ENCODE measurements at regions of chr12 and their contacts with region 1.

Region 1: DNA sequence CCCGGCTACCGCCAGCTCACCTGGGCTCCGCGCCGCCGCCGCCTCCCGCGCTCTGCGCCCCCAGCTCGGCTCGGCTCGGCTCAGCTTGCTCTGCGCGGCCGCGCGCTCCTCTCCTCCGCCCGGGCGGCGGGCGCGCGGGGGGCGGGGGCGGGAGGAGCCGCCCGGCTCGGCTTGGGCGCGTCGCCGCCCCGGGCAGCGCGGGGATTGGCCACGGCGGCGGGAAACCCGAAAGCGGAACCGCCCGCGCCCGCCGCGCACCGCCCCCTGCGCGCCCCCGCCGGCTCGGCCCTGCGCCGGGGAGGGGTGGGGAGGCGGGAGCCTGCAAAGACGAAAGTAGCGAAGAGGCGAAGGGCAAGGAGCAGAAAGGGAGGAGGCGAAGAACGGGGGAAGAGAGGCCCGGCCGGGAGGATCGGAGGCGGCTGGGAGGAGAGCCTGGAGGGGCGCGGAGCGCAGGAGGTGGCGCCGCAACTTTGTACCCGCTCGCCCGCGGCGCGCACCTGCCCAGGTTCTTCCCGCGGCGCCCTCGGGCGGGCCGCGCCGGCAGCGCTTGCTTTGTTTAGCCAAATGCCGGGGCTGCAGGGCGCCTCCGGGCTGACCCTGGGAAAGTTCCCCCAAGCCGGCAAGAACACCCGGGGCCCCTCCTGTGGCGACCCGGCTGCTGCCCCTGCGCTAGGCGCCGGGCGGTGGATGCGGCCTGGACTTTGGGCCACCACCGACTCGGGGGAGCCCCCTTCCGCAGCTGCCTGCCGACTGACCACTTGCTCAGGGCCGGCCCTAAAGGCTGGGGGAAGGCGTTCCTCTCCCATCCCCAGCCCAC is at the start of gene CAMKK2:
- DNase-seq: peak; percentile 92
- ATAC-seq: peak; percentile 86
- H3K4me3 Mint-ChIP-seq: peak within 1 kb of the TSS; percentile 88
- H3K27ac Mint-ChIP-seq: peak within 1 kb of the TSS; percentile 80
- H3K4me1 Mint-ChIP-seq: peaks cover 20% of the 10 kb centered on the region
- H3K27me3 Mint-ChIP-seq: no peaks in the 10 kb centered on the region
- total RNA-seq, gene CAMKK2: 24.2 to 30.3 TPM

Region 2: GRCh38 chr12:120725659-120726509 is 570.9 kb before region 1 on chr12 and contains the start of gene ACADS:
- CTCF ChIA-PET with region 1: no interaction called
- POLR2A ChIA-PET with region 1: no interaction called
- intact Hi-C with region 1: loop called in 1 of 2 experiments (anchors 1 kb)
- DNase-seq: peak; percentile 96
- ATAC-seq: peak; percentile 100
- H3K4me3 Mint-ChIP-seq: peak within 1 kb of the TSS; percentile 78
- H3K27ac Mint-ChIP-seq: peak within 1 kb of the TSS; percentile 64
- H3K4me1 Mint-ChIP-seq: peaks cover 17% of the 10 kb centered on the region
- H3K27me3 Mint-ChIP-seq: no peaks in the 10 kb centered on the region
- total RNA-seq, gene ACADS: 10.1 to 17.4 TPM

Region 3: GRCh38 chr12:121170611-121171260 is 126.1 kb before region 1 on chr12:
- CTCF ChIA-PET with region 1: no interaction called
- POLR2A ChIA-PET with region 1: no interaction called
- intact Hi-C with region 1: no loop called
- DNase-seq: peak; percentile 14
- ATAC-seq: peak; percentile 65
- H3K4me3 Mint-ChIP-seq: no peak overlapping the region
- H3K27ac Mint-ChIP-seq: no peak overlapping the region
- H3K4me1 Mint-ChIP-seq: no peaks in the 10 kb centered on the region
- H3K27me3 Mint-ChIP-seq: no peaks in the 10 kb centered on the region

Region 4: GRCh38 chr12:121209624-121210572 is 86.9 kb before region 1 on chr12 and contains the start of gene P2RX4:
- CTCF ChIA-PET with region 1: no interaction called
- POLR2A ChIA-PET with region 1: no interaction called
- intact Hi-C with region 1: loop called in 1 of 2 experiments (anchors 1 kb)
- DNase-seq: peak; percentile 93
- ATAC-seq: peak; percentile 79
- H3K4me3 Mint-ChIP-seq: peak within 1 kb of the TSS; percentile 79
- H3K27ac Mint-ChIP-seq: peak within 1 kb of the TSS; percentile 89
- H3K4me1 Mint-ChIP-seq: peaks cover 31% of the 10 kb centered on the region
- H3K27me3 Mint-ChIP-seq: no peaks in the 10 kb centered on the region
- total RNA-seq, gene P2RX4: 21.2 to 21.6 TPM

Region 5: GRCh38 chr12:121351820-121352681 is 55.2 kb after region 1 on chr12 and contains the start of gene ANAPC5:
- CTCF ChIA-PET with region 1: interaction called, 6 read pairs
- POLR2A ChIA-PET with region 1: interaction called, 3 read pairs
- intact Hi-C with region 1: loop called (anchors 1 to 5 kb)
- DNase-seq: peak; percentile 94
- ATAC-seq: peak; percentile 99
- H3K4me3 Mint-ChIP-seq: peak within 1 kb of the TSS; percentile 92
- H3K27ac Mint-ChIP-seq: peak within 1 kb of the TSS; percentile 97
- H3K4me1 Mint-ChIP-seq: peaks cover 24% of the 10 kb centered on the region
- H3K27me3 Mint-ChIP-seq: peaks cover under 1% of the 10 kb centered on the region
- total RNA-seq, gene ANAPC5: 113 to 118 TPM

Region 6: GRCh38 chr12:121467115-121467793 is 170.4 kb after region 1 on chr12:
- CTCF ChIA-PET with region 1: interaction called, 4 read pairs
- POLR2A ChIA-PET with region 1: no interaction called
- intact Hi-C with region 1: loop called in 1 of 2 experiments (anchors 1 kb)
- DNase-seq: peak; percentile 93
- ATAC-seq: peak; percentile 94
- H3K4me3 Mint-ChIP-seq: peak overlapping the region; percentile 57
- H3K27ac Mint-ChIP-seq: no peak overlapping the region
- H3K4me1 Mint-ChIP-seq: peaks cover 20% of the 10 kb centered on the region
- H3K27me3 Mint-ChIP-seq: no peaks in the 10 kb centered on the region

Region 7: GRCh38 chr12:121579981-121580868 is 283.4 kb after region 1 on chr12:
- CTCF ChIA-PET with region 1: no interaction called
- POLR2A ChIA-PET with region 1: no interaction called
- intact Hi-C with region 1: loop called in 1 of 2 experiments (anchors 2 kb)
- DNase-seq: peak; percentile 87
- ATAC-seq: peak; percentile 76
- H3K4me3 Mint-ChIP-seq: peak overlapping the region; percentile 83
- H3K27ac Mint-ChIP-seq: peak overlapping the region; percentile 99
- H3K4me1 Mint-ChIP-seq: peaks cover 24% of the 10 kb centered on the region
- H3K27me3 Mint-ChIP-seq: no peaks in the 10 kb centered on the region

Region 8: DNA sequence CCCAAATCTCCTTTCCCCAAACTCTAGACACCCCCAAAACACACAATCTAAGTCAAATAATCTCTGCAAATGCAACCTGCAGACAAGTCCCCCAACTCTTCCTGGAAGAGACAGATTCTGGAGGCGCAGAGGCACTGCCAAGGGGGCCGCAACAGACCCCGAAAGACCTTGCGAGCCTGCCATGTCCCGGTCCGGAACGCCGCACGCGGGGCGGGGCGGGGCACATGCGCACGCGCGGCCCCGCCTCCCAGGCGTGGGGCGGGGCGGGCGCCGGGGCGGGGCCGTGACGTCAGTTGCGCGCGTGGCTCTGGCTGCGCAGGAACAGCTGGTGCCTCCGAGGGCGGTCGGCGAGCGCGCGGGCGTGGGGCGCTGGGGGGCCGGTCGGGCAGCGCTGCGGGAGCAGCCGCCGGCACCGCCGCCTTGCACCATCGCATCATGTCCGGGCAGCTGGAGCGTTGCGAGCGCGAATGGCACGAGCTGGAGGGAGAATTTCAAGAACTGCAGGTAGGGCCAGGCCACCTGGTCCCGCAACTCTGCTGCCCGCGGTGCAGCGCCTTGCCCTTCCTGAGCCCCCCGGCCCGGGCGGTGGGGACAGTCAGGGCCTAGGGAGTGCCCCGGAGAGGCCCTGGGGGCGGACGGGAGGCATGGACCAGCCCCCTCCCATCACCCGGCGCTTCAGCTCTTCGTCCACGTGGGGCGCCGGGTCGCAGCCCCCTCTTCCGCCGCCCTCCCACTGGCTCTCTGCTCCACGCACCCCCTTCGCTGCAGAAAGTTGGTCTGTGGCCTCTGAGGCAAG is 415.8 kb after region 1 on chr12 and contains the start of gene TMEM120B:
- CTCF ChIA-PET with region 1: no interaction called
- POLR2A ChIA-PET with region 1: no interaction called
- intact Hi-C with region 1: loop called in 1 of 2 experiments (anchors 1 kb)
- DNase-seq: peak; percentile 90
- ATAC-seq: peak; percentile 87
- H3K4me3 Mint-ChIP-seq: peak within 1 kb of the TSS; percentile 95
- H3K27ac Mint-ChIP-seq: peak within 1 kb of the TSS; percentile 91
- H3K4me1 Mint-ChIP-seq: peaks cover 16% of the 10 kb centered on the region
- H3K27me3 Mint-ChIP-seq: no peaks in the 10 kb centered on the region
- total RNA-seq, gene TMEM120B: 8.8 to 11.7 TPM

Measured in activated CD4-positive, alpha-beta T cell treated with anti-CD3 and anti-CD28 coated beads for 36 hours (primary cell).